B cell (primary cell): ENCODE measurements at regions of chr2 and their contacts with region 1.

Region 1: DNA sequence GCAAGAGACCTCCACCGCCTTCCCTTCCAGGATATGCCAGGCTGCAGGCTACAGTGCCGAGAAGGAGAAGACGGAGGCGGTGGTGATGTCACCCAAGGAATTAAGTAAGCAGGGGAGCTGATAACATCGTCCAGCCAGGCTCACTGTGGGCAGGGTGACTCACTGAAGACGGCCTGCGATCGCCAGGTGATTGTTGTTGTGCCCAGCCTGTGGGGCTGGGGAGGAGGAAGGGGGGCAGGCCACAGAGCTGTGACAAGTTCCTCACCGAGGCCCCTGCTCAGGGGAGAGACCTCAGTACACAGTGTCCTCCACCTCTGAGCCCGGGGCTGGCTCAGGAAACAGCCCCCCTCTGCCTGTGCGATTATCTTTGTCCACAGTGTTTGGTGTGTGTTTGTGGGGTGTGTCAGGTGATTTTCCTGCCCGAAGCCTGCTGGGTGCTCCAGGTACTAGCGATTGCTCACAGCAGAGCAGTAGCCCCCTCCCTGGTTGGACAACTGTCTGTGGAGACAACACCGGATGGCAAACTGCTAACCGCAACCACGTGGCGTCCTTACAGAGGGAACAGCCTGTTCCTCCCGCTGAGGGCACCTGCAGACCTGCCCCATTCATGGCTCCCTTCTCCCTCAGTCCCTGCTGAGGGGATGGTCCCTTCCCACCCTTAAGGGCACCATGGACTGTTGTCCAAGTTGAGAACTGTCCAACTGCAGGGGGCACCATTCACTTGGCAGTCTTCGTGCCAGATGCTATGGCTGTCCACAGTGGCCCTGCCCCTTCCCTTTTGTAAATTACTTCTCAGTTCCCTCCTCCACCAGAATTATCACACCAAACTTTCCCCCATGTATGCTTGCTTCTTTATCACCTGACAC is 95.1 kb downstream of the ZFP36L2 start:
- DNase-seq: peak; percentile 90
- ATAC-seq: peak; percentile 54
- H3K4me3 ChIP-seq: peak overlapping the region in 1 of 5 experiments; percentile 19
- H3K4me3 Mint-ChIP-seq: peak overlapping the region; percentile 55
- H3K27ac ChIP-seq: peak overlapping the region; percentile 87 to 89
- H3K27ac Mint-ChIP-seq: peak overlapping the region; percentile 83
- H3K4me1 ChIP-seq: peaks cover 89 to 100% of the 10 kb centered on the region in 2 donors
- H3K4me1 Mint-ChIP-seq: peaks cover 92% of the 10 kb centered on the region
- H3K27me3 ChIP-seq: peaks cover 0 to 2% (median 0%) of the 10 kb centered on the region in 4 experiments
- H3K27me3 Mint-ChIP-seq: no peaks in the 10 kb centered on the region
- CTCF ChIP-seq: peak; percentile 69

Region 2: DNA sequence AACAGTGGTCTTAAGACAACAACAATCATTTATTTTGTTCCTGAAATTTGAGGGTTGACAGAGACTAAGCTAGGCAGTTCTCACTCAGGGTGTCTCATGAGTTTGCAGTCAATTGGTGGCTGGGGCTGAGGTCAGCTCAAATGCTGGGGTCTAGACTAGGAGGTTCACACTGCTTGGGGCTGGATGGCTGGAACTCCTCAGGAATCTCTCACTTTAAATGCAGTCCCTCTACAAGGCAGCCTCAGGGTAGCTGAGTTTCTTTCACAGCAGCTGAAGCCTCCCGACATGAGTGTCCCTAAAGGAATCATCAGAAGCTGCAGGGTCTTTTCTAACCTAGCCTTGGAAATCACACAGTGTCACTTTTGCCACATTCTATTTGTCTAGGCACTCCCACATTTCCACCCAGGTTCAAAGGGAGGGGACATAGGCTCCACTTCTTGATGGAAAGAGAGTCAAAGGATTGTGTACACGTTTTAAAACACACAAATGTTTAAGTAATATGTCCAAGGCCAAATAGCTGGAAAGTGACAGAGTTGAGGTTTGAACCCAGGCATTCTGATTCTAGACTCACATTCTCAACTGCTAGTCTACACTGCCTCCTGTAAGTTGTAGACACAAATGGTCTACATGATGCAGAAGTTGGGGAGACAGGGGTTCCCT is 38.6 kb before region 1 on chr2:
- CTCF ChIA-PET with region 1: no interaction called
- POLR2A ChIA-PET with region 1: no interaction called
- intact Hi-C with region 1: no loop called
- DNase-seq: no peak
- ATAC-seq: no peak
- H3K4me3 ChIP-seq: no peak overlapping the region
- H3K4me3 Mint-ChIP-seq: no peak overlapping the region
- H3K27ac ChIP-seq: no peak overlapping the region
- H3K27ac Mint-ChIP-seq: no peak overlapping the region
- H3K4me1 ChIP-seq: peaks cover 2 to 3% of the 10 kb centered on the region in 2 donors
- H3K4me1 Mint-ChIP-seq: peaks cover 4% of the 10 kb centered on the region
- H3K27me3 ChIP-seq: no peaks in the 10 kb centered on the region
- H3K27me3 Mint-ChIP-seq: no peaks in the 10 kb centered on the region
- CTCF ChIP-seq: no peak

Region 3: GRCh38 chr2:43105586-43106558 is 25.4 kb before region 1 on chr2:
- CTCF ChIA-PET with region 1: interaction called, 28 read pairs
- POLR2A ChIA-PET with region 1: interaction called, 12 read pairs
- intact Hi-C with region 1: loop called (anchors 1 kb)
- DNase-seq: peak; percentile 78
- ATAC-seq: peak; percentile 65
- H3K4me3 ChIP-seq: no peak overlapping the region
- H3K4me3 Mint-ChIP-seq: peak overlapping the region; percentile 78
- H3K27ac ChIP-seq: peak overlapping the region; percentile 80 to 88
- H3K27ac Mint-ChIP-seq: peak overlapping the region; percentile 96
- H3K4me1 ChIP-seq: peaks cover 58 to 74% of the 10 kb centered on the region in 2 donors
- H3K4me1 Mint-ChIP-seq: peaks cover 61% of the 10 kb centered on the region
- H3K27me3 ChIP-seq: no peaks in the 10 kb centered on the region
- H3K27me3 Mint-ChIP-seq: no peaks in the 10 kb centered on the region
- CTCF ChIP-seq: peak; percentile 61

Region 4: DNA sequence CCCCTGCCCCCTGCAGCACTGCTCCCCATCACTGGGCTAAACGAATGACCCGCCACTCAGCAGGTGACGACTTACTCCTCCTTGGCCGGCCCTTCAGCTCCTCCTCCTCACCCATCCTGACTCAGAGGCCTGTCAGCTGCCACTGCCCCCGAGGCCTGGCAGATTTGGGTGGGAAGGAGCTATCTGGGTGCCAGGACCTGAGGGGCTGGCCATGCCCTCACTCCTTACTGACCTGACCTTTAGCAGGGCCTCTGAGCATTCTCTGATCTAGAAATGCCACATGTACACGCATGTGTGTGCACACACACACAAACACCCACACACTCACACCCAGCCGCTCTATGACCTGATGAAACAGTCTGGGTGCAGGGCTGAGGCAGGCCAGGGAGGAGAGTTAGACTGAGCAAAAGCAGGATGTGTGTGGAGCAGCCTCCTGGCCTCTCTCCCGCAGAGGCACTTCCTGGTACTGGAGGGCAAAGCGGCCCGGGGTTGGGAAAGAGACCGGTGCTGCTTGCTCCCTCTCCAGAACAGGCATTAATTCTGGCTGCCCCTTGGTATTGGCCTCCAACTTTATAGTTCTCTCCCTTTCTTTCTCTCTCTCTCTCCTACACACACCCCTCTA is 27.1 kb after region 1 on chr2:
- CTCF ChIA-PET with region 1: interaction called, 6 read pairs
- POLR2A ChIA-PET with region 1: interaction called, 5 read pairs
- intact Hi-C with region 1: loop called (anchors 1 kb)
- DNase-seq: no peak
- ATAC-seq: peak; percentile 7
- H3K4me3 ChIP-seq: peak overlapping the region in 1 of 5 experiments; percentile 14
- H3K4me3 Mint-ChIP-seq: peak overlapping the region; percentile 81
- H3K27ac ChIP-seq: peak overlapping the region; percentile 80 to 84
- H3K27ac Mint-ChIP-seq: peak overlapping the region; percentile 97
- H3K4me1 ChIP-seq: peaks cover 27 to 51% of the 10 kb centered on the region in 2 donors
- H3K4me1 Mint-ChIP-seq: peaks cover 57% of the 10 kb centered on the region
- H3K27me3 ChIP-seq: no peaks in the 10 kb centered on the region
- H3K27me3 Mint-ChIP-seq: no peaks in the 10 kb centered on the region
- CTCF ChIP-seq: no peak

Region 5: GRCh38 chr2:43178602-43179542 is 47.6 kb after region 1 on chr2:
- CTCF ChIA-PET with region 1: interaction called, 9 read pairs
- POLR2A ChIA-PET with region 1: interaction called, 16 read pairs
- intact Hi-C with region 1: loop called (anchors 1 kb)
- DNase-seq: no peak
- ATAC-seq: no peak
- H3K4me3 ChIP-seq: no peak overlapping the region
- H3K4me3 Mint-ChIP-seq: no peak overlapping the region
- H3K27ac ChIP-seq: peak overlapping the region in 1 of 2 donors; percentile 50
- H3K27ac Mint-ChIP-seq: peak overlapping the region; percentile 76
- H3K4me1 ChIP-seq: peaks cover 39 to 51% of the 10 kb centered on the region in 2 donors
- H3K4me1 Mint-ChIP-seq: peaks cover 52% of the 10 kb centered on the region
- H3K27me3 ChIP-seq: no peaks in the 10 kb centered on the region
- H3K27me3 Mint-ChIP-seq: no peaks in the 10 kb centered on the region
- CTCF ChIP-seq: no peak

Region 6: DNA sequence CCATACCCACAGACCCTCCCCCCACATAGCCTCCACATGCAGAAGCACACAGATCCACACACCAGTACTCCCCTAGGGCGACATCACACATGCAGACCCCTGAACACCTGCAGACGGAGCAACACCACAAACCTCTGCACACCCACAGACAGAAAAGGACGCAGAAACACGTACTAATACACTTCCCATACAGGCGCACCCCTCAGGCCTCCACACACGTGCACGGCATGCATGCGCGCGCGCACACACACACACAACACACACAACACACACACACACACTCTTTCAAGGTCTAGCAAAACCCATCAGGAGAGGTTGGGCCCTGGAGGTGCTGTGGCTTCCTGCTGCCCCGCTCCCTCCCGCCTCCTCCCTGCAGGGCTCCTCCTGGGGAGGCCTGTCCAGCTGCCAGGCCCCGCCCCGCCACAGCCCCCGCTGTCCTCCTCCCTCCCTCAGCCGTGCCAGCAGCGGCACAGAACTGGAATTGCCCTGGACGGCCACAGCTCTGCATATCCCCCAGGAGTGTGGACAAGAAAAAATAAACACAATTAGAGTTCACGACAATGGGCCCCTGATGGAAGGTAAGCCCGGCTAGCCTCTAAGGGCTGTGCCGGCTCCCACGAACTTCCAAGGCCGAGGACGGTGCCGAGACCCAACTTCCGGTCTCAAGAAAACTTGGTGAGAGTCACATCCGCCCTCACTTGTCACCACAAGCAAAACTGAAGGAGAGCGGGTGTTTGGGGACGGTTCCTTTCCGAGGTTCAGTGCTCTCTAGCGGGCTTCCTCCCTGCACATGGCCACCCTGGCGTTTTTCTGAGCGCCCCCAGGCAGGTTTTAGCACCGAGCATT is 88.3 kb after region 1 on chr2:
- CTCF ChIA-PET with region 1: interaction called, 650 read pairs
- POLR2A ChIA-PET with region 1: interaction called, 561 read pairs
- intact Hi-C with region 1: loop called (anchors 1 kb)
- DNase-seq: peak; percentile 89
- ATAC-seq: peak; percentile 48
- H3K4me3 ChIP-seq: peak overlapping the region; percentile 9 to 92 (median 82)
- H3K4me3 Mint-ChIP-seq: peak overlapping the region; percentile 87
- H3K27ac ChIP-seq: peak overlapping the region; percentile 87 to 90
- H3K27ac Mint-ChIP-seq: peak overlapping the region; percentile 94
- H3K4me1 ChIP-seq: peaks cover 52 to 62% of the 10 kb centered on the region in 2 donors
- H3K4me1 Mint-ChIP-seq: peaks cover 59% of the 10 kb centered on the region
- H3K27me3 ChIP-seq: no peaks in the 10 kb centered on the region
- H3K27me3 Mint-ChIP-seq: no peaks in the 10 kb centered on the region
- CTCF ChIP-seq: no peak